HepG2 (cell line): ENCODE measurements at regions of chr11 and their contacts with region 1.

Region 1: DNA sequence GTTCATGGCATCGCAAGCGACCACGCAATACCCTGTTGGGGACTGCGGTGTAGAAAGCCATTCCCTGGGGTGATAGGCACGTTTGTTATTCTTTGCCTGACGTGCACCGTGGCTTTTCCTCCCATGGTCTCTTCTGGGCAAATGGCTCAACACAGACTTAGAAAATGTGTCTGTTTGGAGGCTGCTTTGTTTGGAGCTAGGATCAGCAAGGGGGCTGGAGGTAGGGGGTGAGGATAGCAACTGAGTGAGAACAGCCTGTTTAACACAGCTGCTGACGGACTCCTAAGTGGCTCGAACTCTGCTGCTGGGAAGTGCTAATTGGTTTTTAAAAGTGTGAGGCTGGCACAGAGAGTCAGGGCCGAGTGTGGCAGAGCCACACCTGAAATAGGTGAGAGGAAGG is 16.1 kb upstream of the CHRM4 start:
- DNase-seq: no peak
- ATAC-seq: no peak
- H3K4me3 ChIP-seq: no peak overlapping the region
- H3K27ac ChIP-seq: no peak overlapping the region
- H3K4me1 ChIP-seq: no peaks in the 10 kb centered on the region; the same call in 1 of the 2 replicates
- H3K27me3 ChIP-seq: no peaks in the 10 kb centered on the region; a peak in 1 of 5 replicates
- CTCF ChIP-seq: no peak
- EP300 ChIP-seq: no peak
- POLR2A ChIP-seq: no peak
- RAD21 ChIP-seq: no peak

Region 2: DNA sequence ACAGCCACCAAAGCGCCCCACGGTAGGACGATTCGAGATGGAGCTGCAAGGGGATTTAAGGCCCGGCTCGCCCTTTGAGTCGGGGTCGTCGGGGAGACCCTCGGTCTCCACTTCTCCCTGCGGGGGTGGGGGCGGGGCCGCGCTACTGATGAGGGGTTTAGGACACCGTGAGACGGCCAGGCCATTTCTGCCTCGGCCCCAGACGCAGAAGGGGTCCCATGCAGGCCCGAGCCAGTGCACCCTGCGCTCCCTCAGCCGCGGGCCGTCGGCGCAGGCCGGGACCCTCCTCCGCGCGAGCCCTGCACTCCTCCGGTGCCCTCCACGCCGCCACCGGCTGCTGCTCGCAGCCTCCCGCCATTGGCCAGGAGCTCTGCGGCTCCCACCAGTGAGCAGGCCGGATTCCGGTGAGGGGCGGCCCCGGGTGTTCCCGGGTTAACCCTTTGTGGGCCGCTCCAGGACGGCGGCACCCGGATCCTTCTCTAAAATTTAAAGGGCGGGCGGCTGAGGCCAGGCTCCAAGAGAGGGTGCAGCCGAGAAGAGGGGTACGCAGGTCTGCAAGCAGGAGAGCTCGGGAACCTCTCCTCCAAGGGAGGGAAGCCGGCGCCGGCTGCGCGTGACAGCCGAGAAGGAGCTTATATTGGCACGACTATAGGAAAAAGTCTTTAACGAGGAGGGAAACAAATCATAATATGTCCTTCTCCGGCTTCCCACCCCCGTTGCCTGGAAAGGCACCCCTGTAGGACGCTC is 112.2 kb before region 1 on chr11:
- CTCF ChIA-PET with region 1: no interaction called
- POLR2A ChIA-PET with region 1: no interaction called
- in situ Hi-C with region 1: no loop called
- intact Hi-C with region 1: no loop called
- DNase-seq: peak; percentile 27
- ATAC-seq: peak; percentile 91
- H3K4me3 ChIP-seq: peak overlapping the region; percentile 22 to 50 (median 24); a peak in 3 of 6 replicates
- H3K27ac ChIP-seq: no peak overlapping the region
- H3K4me1 ChIP-seq: peaks cover 27% of the 10 kb centered on the region
- H3K27me3 ChIP-seq: peaks cover 20 to 71% of the 10 kb centered on the region in 2 experiments; a peak in 4 of 5 replicates
- CTCF ChIP-seq: no peak
- EP300 ChIP-seq: no peak
- POLR2A ChIP-seq: no peak
- RAD21 ChIP-seq: no peak

Region 3: DNA sequence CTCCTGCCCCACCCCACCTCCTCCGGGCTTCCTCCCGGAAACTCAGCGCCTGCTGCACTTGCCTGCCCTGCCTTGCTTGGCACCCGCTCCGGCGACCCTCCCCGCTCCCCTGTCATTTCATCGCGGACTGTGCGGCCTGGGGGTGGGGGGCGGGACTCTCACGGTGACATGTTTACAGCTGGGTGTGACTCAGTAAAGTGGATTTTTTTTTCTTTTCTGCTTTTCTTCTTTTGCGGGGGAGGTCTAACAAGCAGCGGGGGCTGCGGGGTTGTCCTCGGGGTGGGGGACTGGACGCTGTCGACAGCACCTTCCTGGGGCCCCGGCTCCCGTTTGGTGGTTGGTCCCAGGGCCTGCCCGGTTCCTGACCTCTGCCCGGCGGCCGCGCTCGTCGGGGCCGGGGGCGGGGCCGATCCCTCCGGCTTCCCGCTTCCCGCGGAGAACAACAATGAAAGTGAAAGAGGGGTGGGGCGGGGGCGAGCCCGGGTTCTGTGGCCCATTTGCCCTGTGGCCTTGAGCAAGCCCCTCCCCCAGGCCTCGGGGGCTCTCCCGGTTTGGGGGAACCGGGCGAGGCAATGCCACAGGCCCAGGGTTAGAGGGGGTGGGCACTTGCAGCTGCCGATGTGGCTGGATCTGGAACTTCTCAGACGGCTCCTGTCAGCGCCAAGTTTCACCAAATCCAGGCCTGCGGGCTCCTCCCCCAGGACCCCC is 27.1 kb before region 1 on chr11:
- CTCF ChIA-PET with region 1: no interaction called
- POLR2A ChIA-PET with region 1: no interaction called
- in situ Hi-C with region 1: no loop called
- intact Hi-C with region 1: loop called (anchors 1 kb)
- DNase-seq: peak; percentile 78
- ATAC-seq: peak; percentile 38
- H3K4me3 ChIP-seq: peak overlapping the region; percentile 87 to 92 (median 88)
- H3K27ac ChIP-seq: peak overlapping the region; percentile 89
- H3K4me1 ChIP-seq: peaks cover 31% of the 10 kb centered on the region
- H3K27me3 ChIP-seq: no peaks in the 10 kb centered on the region
- CTCF ChIP-seq: no peak
- EP300 ChIP-seq: 0 out of 4 replicates have a peak, but pooled peaks of 1 of the 2 experiments have one; percentile 3
- POLR2A ChIP-seq: no peak
- RAD21 ChIP-seq: no peak